ENCODE measurements at regions of chr1 and their contacts with region 1.

Region 1: GRCh38 chr1:11272832-11273594 is at the start of gene UBIAD1:
- DNase-seq: no peak
- ATAC-seq: peak; percentile 95
- H3K4me3 ChIP-seq: peak within 1 kb of the TSS; percentile 79 to 85
- H3K27ac ChIP-seq: peak within 1 kb of the TSS; percentile 87
- H3K4me1 ChIP-seq: peaks cover 10% of the 10 kb centered on the region; the same call in 1 of the 2 replicates
- H3K27me3 ChIP-seq: no peaks in the 10 kb centered on the region
- CTCF ChIP-seq: no peak
- total RNA-seq, gene UBIAD1: 24.7 TPM

Region 2: DNA sequence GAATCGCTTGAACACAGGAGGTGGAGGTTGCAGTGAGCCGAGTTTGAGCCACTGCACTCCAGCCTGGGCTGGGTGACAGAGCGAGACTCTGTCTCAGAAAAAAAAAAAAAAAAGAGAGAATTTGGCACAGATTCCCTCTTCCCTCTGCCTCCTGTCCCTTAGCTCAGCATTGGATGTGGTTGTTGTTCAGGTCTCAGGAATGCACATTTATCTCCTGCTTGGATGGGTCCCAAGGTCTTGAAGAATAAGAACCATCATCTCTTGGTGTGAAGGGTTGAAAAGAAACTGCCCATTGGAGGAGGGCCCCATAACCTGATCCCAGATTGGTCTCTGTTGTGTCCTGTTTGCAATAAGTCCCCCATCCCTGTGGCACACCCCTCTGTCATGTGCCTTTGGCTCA is 34.8 kb after region 1 on chr1:
- CTCF ChIA-PET with region 1: no interaction called
- POLR2A ChIA-PET with region 1: interaction called, 10 read pairs
- in situ Hi-C with region 1: no loop called
- intact Hi-C with region 1: no loop called
- DNase-seq: no peak
- ATAC-seq: no peak
- H3K4me3 ChIP-seq: no peak overlapping the region
- H3K27ac ChIP-seq: no peak overlapping the region
- H3K4me1 ChIP-seq: no peaks in the 10 kb centered on the region
- H3K27me3 ChIP-seq: no peaks in the 10 kb centered on the region
- CTCF ChIP-seq: no peak

Measured in Panc1 (cell line).